Endothelial cell of umbilical vein (primary cell): ENCODE measurements at regions of chr3 and their contacts with region 1.

Region 1: GRCh38 chr3:49454458-49454857 is 15.6 kb upstream of the DAG1 start:
- DNase-seq: no peak
- H3K4me3 ChIP-seq: no peak overlapping the region
- H3K27ac ChIP-seq: no peak overlapping the region
- H3K4me1 ChIP-seq: no peaks in the 10 kb centered on the region
- H3K27me3 ChIP-seq: no peaks in the 10 kb centered on the region
- CTCF ChIP-seq: no peak
- POLR2A ChIP-seq: no peak

Region 2: GRCh38 chr3:49104483-49105291 is 349.8 kb before region 1 on chr3 and contains the start of gene QARS1:
- CTCF ChIA-PET with region 1: no interaction called
- POLR2A ChIA-PET with region 1: no interaction called
- dilution Hi-C with region 1: no loop called
- intact Hi-C with region 1: loop called (anchors 1 kb)
- DNase-seq: peak; percentile 94
- H3K4me3 ChIP-seq: peak within 1 kb of the TSS; percentile 67 to 90 (median 85)
- H3K27ac ChIP-seq: peak within 1 kb of the TSS; percentile 72
- H3K4me1 ChIP-seq: peaks cover 9% of the 10 kb centered on the region
- H3K27me3 ChIP-seq: no peaks in the 10 kb centered on the region
- CTCF ChIP-seq: no peak
- POLR2A ChIP-seq: peak; percentile 90
- total RNA-seq, gene QARS1: 261 and 285 TPM in 2 replicates

Region 3: DNA sequence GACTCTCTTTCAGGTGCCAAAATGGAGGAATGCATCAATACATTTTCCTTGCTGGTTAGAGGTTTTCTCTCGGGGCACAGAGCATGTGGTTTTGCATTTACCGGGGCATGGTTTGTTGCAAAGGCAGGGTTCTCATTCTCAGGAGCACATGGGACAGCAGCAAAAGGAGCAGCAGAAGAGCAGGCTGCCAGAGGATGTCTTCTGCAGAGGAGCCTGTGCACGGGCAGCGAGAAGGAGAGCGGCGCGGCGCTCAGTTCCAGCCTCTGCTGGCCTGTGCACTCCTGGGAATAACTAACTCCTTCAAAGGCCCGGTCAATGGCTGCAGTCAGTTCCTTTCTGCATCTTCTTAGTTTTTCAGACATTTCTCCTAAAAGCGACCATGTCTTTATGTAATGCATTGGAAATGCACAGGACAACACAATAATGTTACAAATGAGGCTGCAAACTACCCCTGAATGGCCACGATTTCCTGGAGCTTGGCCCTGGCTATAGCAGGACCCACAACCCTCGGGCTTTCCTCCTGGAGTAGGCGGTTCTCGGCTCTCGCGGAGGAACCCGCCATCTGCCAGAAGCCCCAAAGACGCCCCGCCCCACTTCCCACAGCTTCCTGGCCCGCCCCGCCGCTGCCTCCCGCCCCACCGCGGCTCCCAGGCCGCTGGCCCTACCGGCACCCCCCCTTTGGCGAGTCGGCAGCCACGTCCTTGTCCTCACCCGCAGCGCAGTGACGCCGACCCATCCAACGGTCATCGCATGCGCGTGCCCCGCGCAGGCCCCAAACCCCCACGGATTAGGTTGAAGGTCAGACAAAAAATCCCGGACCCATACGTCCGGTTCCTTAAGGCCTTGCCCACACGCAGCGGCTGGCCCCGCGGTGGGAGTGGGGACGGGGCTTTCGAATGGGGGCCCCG is 177.7 kb before region 1 on chr3 and contains the start of gene C3orf62:
- CTCF ChIA-PET with region 1: interaction called, 12 read pairs
- POLR2A ChIA-PET with region 1: no interaction called
- dilution Hi-C with region 1: no loop called
- intact Hi-C with region 1: no loop called
- DNase-seq: peak; percentile 87
- H3K4me3 ChIP-seq: peak within 1 kb of the TSS; percentile 41 to 65 (median 53)
- H3K27ac ChIP-seq: peak within 1 kb of the TSS; percentile 88
- H3K4me1 ChIP-seq: peaks cover 18% of the 10 kb centered on the region
- H3K27me3 ChIP-seq: no peaks in the 10 kb centered on the region
- CTCF ChIP-seq: no peak
- POLR2A ChIP-seq: peak; percentile 77
- total RNA-seq, gene C3orf62: 3.9 and 5.6 TPM in 2 replicates

Region 4: GRCh38 chr3:49333916-49334633 is 120.4 kb before region 1 on chr3:
- CTCF ChIA-PET with region 1: interaction called, 118 read pairs
- POLR2A ChIA-PET with region 1: no interaction called
- dilution Hi-C with region 1: no loop called
- intact Hi-C with region 1: no loop called
- DNase-seq: no peak
- H3K4me3 ChIP-seq: no peak overlapping the region
- H3K27ac ChIP-seq: no peak overlapping the region
- H3K4me1 ChIP-seq: peaks cover 5% of the 10 kb centered on the region
- H3K27me3 ChIP-seq: no peaks in the 10 kb centered on the region
- CTCF ChIP-seq: no peak
- POLR2A ChIP-seq: no peak

Region 5: GRCh38 chr3:49397470-49397869 is 57.0 kb before region 1 on chr3:
- CTCF ChIA-PET with region 1: interaction called, 10 read pairs
- POLR2A ChIA-PET with region 1: no interaction called
- dilution Hi-C with region 1: no loop called
- intact Hi-C with region 1: no loop called
- DNase-seq: peak; percentile 66
- H3K4me3 ChIP-seq: no peak overlapping the region
- H3K27ac ChIP-seq: no peak overlapping the region
- H3K4me1 ChIP-seq: peaks cover 7% of the 10 kb centered on the region
- H3K27me3 ChIP-seq: no peaks in the 10 kb centered on the region
- CTCF ChIP-seq: no peak
- POLR2A ChIP-seq: no peak

Region 6: GRCh38 chr3:49434731-49435130 is 19.7 kb before region 1 on chr3:
- CTCF ChIA-PET with region 1: interaction called, 12 read pairs
- POLR2A ChIA-PET with region 1: no interaction called
- dilution Hi-C with region 1: no loop called
- intact Hi-C with region 1: no loop called
- DNase-seq: no peak
- H3K4me3 ChIP-seq: no peak overlapping the region
- H3K27ac ChIP-seq: no peak overlapping the region
- H3K4me1 ChIP-seq: peaks cover 2% of the 10 kb centered on the region
- H3K27me3 ChIP-seq: no peaks in the 10 kb centered on the region
- CTCF ChIP-seq: no peak
- POLR2A ChIP-seq: no peak